B cell (primary cell): ENCODE measurements at regions of chr15 and their contacts with region 1.

Region 1: GRCh38 chr15:92853222-92853621 is 46.9 kb upstream of the CHD2 start:
- DNase-seq: no peak
- ATAC-seq: no peak
- H3K4me3 ChIP-seq: no peak overlapping the region
- H3K4me3 Mint-ChIP-seq: peak overlapping the region; percentile 29
- H3K27ac ChIP-seq: no peak overlapping the region
- H3K27ac Mint-ChIP-seq: peak overlapping the region; percentile 55
- H3K4me1 ChIP-seq: peaks cover 32 to 37% of the 10 kb centered on the region in 2 donors
- H3K4me1 Mint-ChIP-seq: peaks cover 37% of the 10 kb centered on the region
- H3K27me3 ChIP-seq: no peaks in the 10 kb centered on the region
- H3K27me3 Mint-ChIP-seq: no peaks in the 10 kb centered on the region
- CTCF ChIP-seq: no peak

Region 2: DNA sequence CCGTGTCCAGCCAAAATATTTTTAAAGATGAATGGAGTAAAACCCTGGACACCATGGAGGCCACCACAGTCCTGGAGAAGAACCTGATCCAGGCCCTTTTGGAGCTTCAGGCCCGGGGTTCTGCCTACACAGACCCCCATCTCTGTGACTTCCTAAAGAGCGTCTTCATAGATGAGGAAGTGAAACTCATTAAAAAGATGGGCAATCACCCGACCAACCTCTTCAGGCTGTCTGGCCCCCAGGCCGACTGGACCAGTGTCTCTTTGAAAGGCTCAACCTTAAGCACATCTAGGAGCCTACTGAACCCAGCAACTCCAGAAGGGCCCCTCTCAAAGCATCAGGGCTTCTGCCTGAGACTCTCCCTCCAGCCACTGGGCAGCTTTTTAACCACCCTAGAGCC is 89.8 kb before region 1 on chr15:
- CTCF ChIA-PET with region 1: no interaction called
- POLR2A ChIA-PET with region 1: no interaction called
- intact Hi-C with region 1: no loop called
- DNase-seq: no peak
- ATAC-seq: no peak
- H3K4me3 ChIP-seq: no peak overlapping the region
- H3K4me3 Mint-ChIP-seq: no peak overlapping the region
- H3K27ac ChIP-seq: no peak overlapping the region
- H3K27ac Mint-ChIP-seq: no peak overlapping the region
- H3K4me1 ChIP-seq: no peaks in the 10 kb centered on the region
- H3K4me1 Mint-ChIP-seq: no peaks in the 10 kb centered on the region
- H3K27me3 ChIP-seq: no peaks in the 10 kb centered on the region
- H3K27me3 Mint-ChIP-seq: no peaks in the 10 kb centered on the region
- CTCF ChIP-seq: no peak

Region 3: DNA sequence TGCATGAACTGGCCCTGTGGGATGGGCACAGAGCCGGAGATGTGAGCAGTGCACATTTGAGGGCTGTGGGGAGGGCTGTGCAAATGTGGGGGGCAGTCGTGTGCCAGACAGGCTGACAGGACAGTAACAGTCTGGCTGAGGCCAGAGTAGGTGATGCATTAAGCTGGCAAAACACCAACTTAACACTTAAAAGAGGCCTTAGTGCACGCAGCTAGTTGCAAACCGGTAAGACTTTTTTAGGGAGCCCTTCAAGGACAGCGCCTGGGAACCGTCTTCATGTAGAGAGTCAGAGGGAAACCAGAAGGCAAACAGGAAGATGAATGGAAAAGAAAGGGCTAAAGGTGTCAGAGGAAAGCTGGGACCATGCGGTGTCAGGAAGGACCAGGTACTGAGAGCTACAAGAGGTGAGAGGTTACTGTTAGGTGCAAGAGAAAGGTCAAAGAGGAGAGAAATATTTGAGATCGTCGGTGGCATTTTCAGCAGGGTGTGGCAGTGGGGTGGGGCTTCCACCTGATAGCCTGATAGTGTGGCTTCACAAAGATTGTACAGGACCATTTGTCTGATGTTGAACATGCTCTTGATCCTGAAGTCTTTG is 16.9 kb after region 1 on chr15:
- CTCF ChIA-PET with region 1: interaction called, 4 read pairs
- POLR2A ChIA-PET with region 1: no interaction called
- intact Hi-C with region 1: loop called (anchors 2 kb)
- DNase-seq: no peak
- ATAC-seq: no peak
- H3K4me3 ChIP-seq: no peak overlapping the region
- H3K4me3 Mint-ChIP-seq: no peak overlapping the region
- H3K27ac ChIP-seq: no peak overlapping the region
- H3K27ac Mint-ChIP-seq: no peak overlapping the region
- H3K4me1 ChIP-seq: no peaks in the 10 kb centered on the region
- H3K4me1 Mint-ChIP-seq: no peaks in the 10 kb centered on the region
- H3K27me3 ChIP-seq: no peaks in the 10 kb centered on the region
- H3K27me3 Mint-ChIP-seq: no peaks in the 10 kb centered on the region
- CTCF ChIP-seq: no peak